Activated CD4-positive, alpha-beta T cell treated with anti-CD3 and anti-CD28 coated beads for 36 hours (primary cell): ENCODE measurements at regions of chr7 and their contacts with region 1.

Region 1: GRCh38 chr7:112449902-112450806 is at the start of gene IFRD1:
- DNase-seq: peak; percentile 99
- ATAC-seq: peak; percentile 78
- H3K4me3 Mint-ChIP-seq: peak within 1 kb of the TSS; percentile 97
- H3K27ac Mint-ChIP-seq: peak within 1 kb of the TSS; percentile 98
- H3K4me1 Mint-ChIP-seq: peaks cover 38% of the 10 kb centered on the region
- H3K27me3 Mint-ChIP-seq: no peaks in the 10 kb centered on the region
- total RNA-seq, gene IFRD1: 40.3 to 48.9 TPM

Region 2: DNA sequence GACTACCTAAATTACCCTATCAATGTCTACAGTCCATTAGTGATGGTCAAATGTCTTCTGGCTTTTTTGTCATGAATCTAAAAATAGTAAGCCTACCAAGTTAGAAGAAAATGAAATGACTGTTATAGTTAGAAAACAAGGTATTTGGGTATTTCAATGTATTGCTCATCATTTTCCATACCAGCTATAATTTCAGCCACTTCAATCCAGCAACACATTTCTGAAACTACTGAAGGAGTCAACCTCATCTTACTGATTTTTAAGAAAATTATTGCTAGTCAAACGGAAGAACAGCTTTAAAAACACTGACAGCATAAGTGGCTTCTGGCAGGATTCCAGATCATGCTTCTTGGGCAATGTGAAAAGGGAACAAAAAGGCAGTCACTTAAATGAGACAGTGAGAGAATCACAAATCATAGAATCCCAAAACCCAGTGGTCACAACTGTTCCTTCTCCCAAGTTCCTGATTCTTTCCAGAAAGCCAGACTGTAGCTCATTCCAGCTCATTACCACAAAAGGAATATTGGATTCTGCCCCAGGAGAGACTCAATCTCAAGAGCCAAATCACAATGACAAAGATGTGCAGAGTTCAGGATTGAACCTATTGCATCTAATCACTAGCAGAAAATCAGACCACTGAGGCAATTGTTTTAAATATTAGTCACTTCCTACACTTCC is 1420.4 kb before region 1 on chr7:
- CTCF ChIA-PET with region 1: no interaction called
- POLR2A ChIA-PET with region 1: no interaction called
- intact Hi-C with region 1: loop called in 1 of 2 experiments (anchors 5 kb)
- DNase-seq: peak; percentile 72
- ATAC-seq: peak; percentile 63
- H3K4me3 Mint-ChIP-seq: peak overlapping the region; percentile 34
- H3K27ac Mint-ChIP-seq: peak overlapping the region; percentile 99
- H3K4me1 Mint-ChIP-seq: peaks cover 61% of the 10 kb centered on the region
- H3K27me3 Mint-ChIP-seq: no peaks in the 10 kb centered on the region

Region 3: GRCh38 chr7:111561885-111562732 is 888.0 kb before region 1 on chr7 and contains the start of gene IMMP2L:
- CTCF ChIA-PET with region 1: no interaction called
- POLR2A ChIA-PET with region 1: interaction called, 3 read pairs
- intact Hi-C with region 1: loop called in 1 of 2 experiments (anchors 2 kb)
- DNase-seq: peak; percentile 94
- ATAC-seq: peak; percentile 95
- H3K4me3 Mint-ChIP-seq: peak within 1 kb of the TSS; percentile 90
- H3K27ac Mint-ChIP-seq: peak within 1 kb of the TSS; percentile 94
- H3K4me1 Mint-ChIP-seq: peaks cover 37% of the 10 kb centered on the region
- H3K27me3 Mint-ChIP-seq: peaks cover 3% of the 10 kb centered on the region
- total RNA-seq, gene IMMP2L: 15.8 to 25.8 TPM

Region 4: DNA sequence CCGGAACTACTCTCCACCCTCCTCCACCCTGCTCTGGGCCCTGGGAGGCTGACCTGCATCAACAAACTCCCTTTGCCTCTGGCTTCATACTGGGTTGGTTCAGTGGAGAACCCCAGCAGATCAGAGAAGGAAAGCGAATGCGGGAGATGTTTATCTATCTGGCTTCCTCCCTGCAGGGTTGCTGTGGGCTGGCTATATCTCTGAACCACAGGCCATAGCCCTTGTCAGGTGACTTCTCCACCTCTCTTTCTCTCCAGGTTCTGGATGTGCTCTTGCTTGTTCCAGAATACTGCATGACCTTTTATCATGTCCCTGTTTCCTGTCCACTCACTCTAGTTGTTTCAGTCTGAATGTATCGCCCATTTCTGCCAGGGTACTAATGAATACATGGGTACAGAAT is 51.6 kb before region 1 on chr7:
- CTCF ChIA-PET with region 1: interaction called, 4 read pairs
- POLR2A ChIA-PET with region 1: no interaction called
- intact Hi-C with region 1: loop called in 1 of 2 experiments (anchors 2 kb)
- DNase-seq: no peak
- ATAC-seq: peak; percentile 81
- H3K4me3 Mint-ChIP-seq: no peak overlapping the region
- H3K27ac Mint-ChIP-seq: peak overlapping the region; percentile 5
- H3K4me1 Mint-ChIP-seq: peaks cover 18% of the 10 kb centered on the region
- H3K27me3 Mint-ChIP-seq: no peaks in the 10 kb centered on the region

Region 5: GRCh38 chr7:112467867-112468266 is 17.7 kb after region 1 on chr7:
- CTCF ChIA-PET with region 1: interaction called, 18 read pairs
- POLR2A ChIA-PET with region 1: interaction called, 7 read pairs
- intact Hi-C with region 1: no loop called
- DNase-seq: no peak
- ATAC-seq: no peak
- H3K4me3 Mint-ChIP-seq: no peak overlapping the region
- H3K27ac Mint-ChIP-seq: no peak overlapping the region
- H3K4me1 Mint-ChIP-seq: no peaks in the 10 kb centered on the region
- H3K27me3 Mint-ChIP-seq: no peaks in the 10 kb centered on the region

Region 6: GRCh38 chr7:112939574-112940314 is 489.6 kb after region 1 on chr7:
- CTCF ChIA-PET with region 1: no interaction called
- POLR2A ChIA-PET with region 1: no interaction called
- intact Hi-C with region 1: loop called (anchors 1 to 2 kb)
- DNase-seq: peak; percentile 99
- ATAC-seq: peak; percentile 97
- H3K4me3 Mint-ChIP-seq: peak overlapping the region; percentile 80
- H3K27ac Mint-ChIP-seq: peak overlapping the region; percentile 96
- H3K4me1 Mint-ChIP-seq: peaks cover 28% of the 10 kb centered on the region
- H3K27me3 Mint-ChIP-seq: no peaks in the 10 kb centered on the region